ENCODE measurements at regions of chr21 and their contacts with region 1.

Region 1: GRCh38 chr21:41612674-41613532 is 104.9 kb upstream of the TMPRSS2 start:
- DNase-seq: peak; percentile 32
- H3K4me3 Mint-ChIP-seq: no peak overlapping the region
- H3K27ac Mint-ChIP-seq: no peak overlapping the region
- H3K4me1 Mint-ChIP-seq: no peaks in the 10 kb centered on the region
- H3K27me3 Mint-ChIP-seq: peaks cover 32% of the 10 kb centered on the region

Region 2: DNA sequence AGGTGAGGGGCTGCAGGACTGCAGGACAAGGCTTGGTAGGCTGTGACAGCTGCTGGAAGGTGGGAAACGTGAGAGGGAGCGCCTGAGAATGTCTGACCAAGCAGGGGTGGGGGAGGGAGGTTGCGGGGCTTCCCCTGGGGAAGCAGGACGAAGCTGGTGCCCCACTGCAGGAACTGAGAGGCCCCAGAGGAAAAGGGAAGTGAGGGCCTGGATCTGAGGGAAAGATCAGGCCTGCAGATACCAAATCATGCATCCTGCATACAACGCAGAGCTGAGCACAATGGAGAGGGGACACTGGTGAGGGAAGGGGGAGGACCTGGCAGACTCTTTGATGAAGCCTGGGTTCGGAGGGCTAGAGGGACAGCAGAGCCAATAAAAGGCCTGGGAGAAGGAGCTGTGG is 510.6 kb before region 1 on chr21:
- CTCF ChIA-PET with region 1: no interaction called
- POLR2A ChIA-PET with region 1: no interaction called
- intact Hi-C with region 1: no loop called
- DNase-seq: no peak
- H3K4me3 Mint-ChIP-seq: no peak overlapping the region
- H3K27ac Mint-ChIP-seq: no peak overlapping the region
- H3K4me1 Mint-ChIP-seq: no peaks in the 10 kb centered on the region
- H3K27me3 Mint-ChIP-seq: peaks cover 19% of the 10 kb centered on the region

Region 3: GRCh38 chr21:41816220-41817165 is 203.6 kb after region 1 on chr21:
- CTCF ChIA-PET with region 1: interaction called, 7 read pairs
- POLR2A ChIA-PET with region 1: no interaction called
- intact Hi-C with region 1: loop called (anchors 5 kb)
- DNase-seq: peak; percentile 71
- H3K4me3 Mint-ChIP-seq: no peak overlapping the region
- H3K27ac Mint-ChIP-seq: no peak overlapping the region
- H3K4me1 Mint-ChIP-seq: peaks cover 2% of the 10 kb centered on the region
- H3K27me3 Mint-ChIP-seq: no peaks in the 10 kb centered on the region

Measured in activated CD4-positive, alpha-beta memory T cell treated with anti-CD3 and anti-CD28 coated beads for 36 hours (primary cell).